T-cell (primary cell): ENCODE measurements at regions of chr12 and their contacts with region 1.

Region 1: GRCh38 chr12:55073043-55074022 is 52.9 kb upstream of the OR9K2 start:
- DNase-seq: peak; percentile 44 to 93 (median 74)
- ATAC-seq: peak; percentile 63 to 72 (median 64)
- H3K4me3 ChIP-seq: no peak overlapping the region
- H3K4me3 Mint-ChIP-seq: no peak overlapping the region
- H3K27ac ChIP-seq: no peak overlapping the region
- H3K27ac Mint-ChIP-seq: peak overlapping the region in 1 of 2 donors; percentile 27
- H3K4me1 ChIP-seq: no peaks in the 10 kb centered on the region
- H3K4me1 Mint-ChIP-seq: peaks cover 4 to 11% (median 5%) of the 10 kb centered on the region in 3 donors
- H3K27me3 ChIP-seq: peaks cover 0 to 6% of the 10 kb centered on the region in 2 experiments
- H3K27me3 Mint-ChIP-seq: peaks cover 20 to 26% of the 10 kb centered on the region in 2 donors

Region 2: DNA sequence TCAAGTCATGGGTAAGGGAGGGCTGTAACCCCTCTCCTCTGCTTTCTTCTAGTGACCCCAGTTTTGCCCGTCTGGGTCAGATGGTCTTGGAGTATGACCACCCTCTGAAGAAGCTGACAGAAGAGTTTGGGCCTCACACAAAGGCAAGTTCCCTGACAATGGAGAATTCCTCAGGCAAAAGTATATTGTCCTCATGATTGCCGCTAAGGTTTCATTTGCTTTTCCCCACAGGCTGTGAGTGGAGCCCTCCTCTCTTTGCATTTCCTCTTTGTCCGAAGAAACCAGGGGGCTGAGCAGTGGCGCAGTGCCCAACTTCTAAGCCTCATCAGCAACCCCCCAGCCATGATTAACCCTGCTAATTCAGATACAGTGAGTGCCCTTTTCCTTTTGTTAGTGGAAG is 563.7 kb before region 1 on chr12:
- CTCF ChIA-PET with region 1: no interaction called
- POLR2A ChIA-PET with region 1: no interaction called
- DNase-seq: no peak
- ATAC-seq: no peak
- H3K4me3 ChIP-seq: no peak overlapping the region
- H3K4me3 Mint-ChIP-seq: no peak overlapping the region
- H3K27ac ChIP-seq: no peak overlapping the region
- H3K27ac Mint-ChIP-seq: no peak overlapping the region
- H3K4me1 ChIP-seq: no peaks in the 10 kb centered on the region
- H3K4me1 Mint-ChIP-seq: peaks cover 12 to 22% (median 18%) of the 10 kb centered on the region in 3 donors
- H3K27me3 ChIP-seq: no peaks in the 10 kb centered on the region
- H3K27me3 Mint-ChIP-seq: no peaks in the 10 kb centered on the region

Region 3: DNA sequence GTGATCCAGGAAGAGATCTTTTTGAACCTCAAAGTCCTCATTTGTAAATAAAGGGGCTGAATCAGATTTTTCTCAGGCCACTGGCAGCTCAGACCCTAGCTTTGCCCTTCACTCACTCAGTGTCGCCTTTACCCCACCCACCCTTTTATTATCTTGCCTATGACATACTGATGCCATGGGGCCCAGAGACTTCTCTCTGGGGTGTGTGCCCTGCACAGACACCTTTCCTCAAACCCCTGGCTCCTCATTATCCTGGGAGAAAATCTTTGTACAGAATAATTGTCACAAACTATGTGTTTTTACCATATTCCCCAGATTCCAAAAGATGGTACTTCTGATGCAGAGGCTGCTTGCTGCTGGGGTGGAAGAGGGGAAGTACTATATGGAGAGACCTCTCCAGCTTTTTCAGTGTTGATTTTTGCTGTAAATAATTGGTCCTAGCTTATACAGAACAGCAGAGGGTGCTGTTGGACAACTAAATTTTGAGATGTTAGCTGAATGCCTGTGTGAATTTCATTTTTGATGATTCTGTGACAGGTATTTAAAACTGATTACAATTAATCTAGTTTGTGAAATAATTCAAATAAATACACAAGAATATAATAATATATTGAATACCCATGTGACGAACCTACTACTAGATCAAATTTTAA is 371.3 kb before region 1 on chr12:
- CTCF ChIA-PET with region 1: interaction called, 8 to 39 read pairs
- POLR2A ChIA-PET with region 1: no interaction called
- DNase-seq: peak in 11 of 35 experiments; percentile 4 to 81 (median 11)
- ATAC-seq: peak; percentile 48 to 55 (median 51)
- H3K4me3 ChIP-seq: no peak overlapping the region
- H3K4me3 Mint-ChIP-seq: no peak overlapping the region
- H3K27ac ChIP-seq: no peak overlapping the region
- H3K27ac Mint-ChIP-seq: no peak overlapping the region
- H3K4me1 ChIP-seq: no peaks in the 10 kb centered on the region
- H3K4me1 Mint-ChIP-seq: no peaks in the 10 kb centered on the region
- H3K27me3 ChIP-seq: peaks cover 0 to 3% of the 10 kb centered on the region in 2 experiments
- H3K27me3 Mint-ChIP-seq: peaks cover 8 to 12% of the 10 kb centered on the region in 2 donors

Region 4: DNA sequence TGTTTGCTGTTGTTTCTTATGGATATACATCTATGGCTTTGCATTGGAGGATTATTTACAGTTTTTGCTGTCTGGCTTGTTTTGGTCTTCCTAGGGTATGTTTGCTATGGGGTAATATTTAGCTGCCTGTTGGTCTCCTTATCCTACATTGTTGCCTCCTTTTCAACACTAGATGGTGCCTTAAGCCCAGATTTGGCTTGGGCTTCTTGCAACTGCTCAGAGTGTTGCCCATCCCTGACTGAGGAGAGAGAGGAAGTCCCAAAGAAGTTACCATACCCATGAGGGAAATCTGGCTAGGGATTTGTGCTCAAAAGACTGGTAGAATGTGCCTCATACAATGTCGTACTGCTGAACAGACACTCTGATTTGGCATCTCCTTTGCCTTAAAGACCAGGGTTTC is 313.6 kb before region 1 on chr12:
- CTCF ChIA-PET with region 1: interaction called in 1 of 2 experiments, 10 read pairs
- POLR2A ChIA-PET with region 1: no interaction called
- DNase-seq: peak in 2 of 35 experiments; percentile 6 to 43
- ATAC-seq: peak in 1 of 4 experiments; percentile 40
- H3K4me3 ChIP-seq: no peak overlapping the region
- H3K4me3 Mint-ChIP-seq: no peak overlapping the region
- H3K27ac ChIP-seq: no peak overlapping the region
- H3K27ac Mint-ChIP-seq: no peak overlapping the region
- H3K4me1 ChIP-seq: no peaks in the 10 kb centered on the region
- H3K4me1 Mint-ChIP-seq: peaks cover 0 to 4% (median 2%) of the 10 kb centered on the region in 3 donors
- H3K27me3 ChIP-seq: no peaks in the 10 kb centered on the region
- H3K27me3 Mint-ChIP-seq: no peaks in the 10 kb centered on the region

Region 5: DNA sequence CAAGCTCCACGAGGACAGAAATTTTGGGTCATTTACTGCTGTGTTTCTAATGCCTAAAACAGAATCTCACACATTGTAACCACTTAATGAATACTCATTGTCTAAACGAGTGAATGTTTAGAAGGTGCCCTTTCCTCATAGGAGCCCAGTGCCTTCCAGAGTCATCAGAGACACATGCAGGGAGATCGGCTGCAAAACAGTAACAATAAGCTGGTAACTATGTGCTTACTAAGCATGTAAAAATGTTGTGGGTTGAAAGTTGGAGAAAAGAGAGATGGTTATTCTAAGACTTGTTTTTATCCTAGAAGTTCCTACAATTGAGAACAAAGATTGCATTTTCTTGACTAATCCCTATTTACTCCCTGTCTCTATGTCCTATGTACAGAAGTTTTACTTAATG is 96.2 kb before region 1 on chr12:
- CTCF ChIA-PET with region 1: interaction called in 1 of 2 experiments, 11 read pairs
- POLR2A ChIA-PET with region 1: no interaction called
- DNase-seq: no peak
- ATAC-seq: no peak
- H3K4me3 ChIP-seq: peak overlapping the region in 1 of 2 donors; percentile 27
- H3K4me3 Mint-ChIP-seq: peak overlapping the region; percentile 90 to 92 (median 91)
- H3K27ac ChIP-seq: peak overlapping the region; percentile 13
- H3K27ac Mint-ChIP-seq: peak overlapping the region; percentile 92 to 98
- H3K4me1 ChIP-seq: peaks cover 53 to 75% of the 10 kb centered on the region in 2 experiments
- H3K4me1 Mint-ChIP-seq: peaks cover 96 to 99% (median 98%) of the 10 kb centered on the region in 3 donors
- H3K27me3 ChIP-seq: no peaks in the 10 kb centered on the region
- H3K27me3 Mint-ChIP-seq: no peaks in the 10 kb centered on the region

Region 6: DNA sequence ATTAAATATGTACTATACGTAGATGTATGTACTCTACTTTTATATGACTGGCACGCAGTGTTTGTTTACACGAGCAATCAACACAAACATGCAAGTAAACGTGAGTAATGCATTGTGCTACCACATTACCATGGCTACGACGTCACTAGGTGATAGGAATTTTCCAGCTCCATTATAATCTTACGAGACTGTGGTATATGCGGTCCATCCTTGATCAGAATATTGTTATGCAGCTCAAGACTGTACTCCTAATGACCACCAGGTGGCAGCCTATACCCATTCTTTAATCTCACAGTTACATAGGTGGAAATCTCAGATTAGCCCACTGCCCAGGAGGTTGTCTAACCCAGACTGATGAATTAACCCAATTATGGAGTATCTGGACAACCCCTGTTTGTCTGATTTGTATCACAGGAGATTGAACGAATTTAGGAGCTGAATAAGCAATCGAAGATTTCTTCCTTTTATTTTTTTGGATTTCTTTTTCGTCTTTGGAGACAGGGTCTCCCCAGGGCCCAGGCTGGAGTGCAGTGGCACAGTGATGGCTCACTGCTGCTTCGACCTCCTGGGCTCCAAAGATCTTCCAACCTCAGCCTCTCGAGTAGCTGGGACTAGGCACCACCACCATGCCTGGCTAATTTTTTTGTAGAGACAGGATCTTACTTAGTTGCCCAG is 80.0 kb before region 1 on chr12:
- CTCF ChIA-PET with region 1: interaction called, 94 to 351 read pairs
- POLR2A ChIA-PET with region 1: interaction called in 1 of 2 experiments, 3 read pairs
- DNase-seq: peak in 31 of 35 experiments; percentile 30 to 91 (median 46)
- ATAC-seq: peak; percentile 66 to 81 (median 74)
- H3K4me3 ChIP-seq: no peak overlapping the region
- H3K4me3 Mint-ChIP-seq: no peak overlapping the region
- H3K27ac ChIP-seq: no peak overlapping the region
- H3K27ac Mint-ChIP-seq: peak overlapping the region in 1 of 2 donors; percentile 25
- H3K4me1 ChIP-seq: peaks cover 31 to 34% of the 10 kb centered on the region in 2 experiments
- H3K4me1 Mint-ChIP-seq: peaks cover 44 to 47% (median 46%) of the 10 kb centered on the region in 3 donors
- H3K27me3 ChIP-seq: no peaks in the 10 kb centered on the region
- H3K27me3 Mint-ChIP-seq: no peaks in the 10 kb centered on the region

Region 7: GRCh38 chr12:55738123-55739024 is 665.0 kb after region 1 on chr12:
- CTCF ChIA-PET with region 1: no interaction called
- POLR2A ChIA-PET with region 1: no interaction called
- DNase-seq: peak; percentile 47 to 92 (median 67)
- ATAC-seq: peak; percentile 74 to 78 (median 76)
- H3K4me3 ChIP-seq: peak overlapping the region; percentile 51 to 70
- H3K4me3 Mint-ChIP-seq: peak overlapping the region; percentile 79 to 85 (median 85)
- H3K27ac ChIP-seq: peak overlapping the region; percentile 50
- H3K27ac Mint-ChIP-seq: peak overlapping the region; percentile 92 to 97
- H3K4me1 ChIP-seq: peaks cover 6 to 29% of the 10 kb centered on the region in 2 experiments
- H3K4me1 Mint-ChIP-seq: peaks cover 22 to 33% (median 31%) of the 10 kb centered on the region in 3 donors
- H3K27me3 ChIP-seq: no peaks in the 10 kb centered on the region
- H3K27me3 Mint-ChIP-seq: no peaks in the 10 kb centered on the region